Right cardiac atrium (tissue), 5 donors: ENCODE measurements at regions of chr1 and their contacts with region 1.

Region 1: DNA sequence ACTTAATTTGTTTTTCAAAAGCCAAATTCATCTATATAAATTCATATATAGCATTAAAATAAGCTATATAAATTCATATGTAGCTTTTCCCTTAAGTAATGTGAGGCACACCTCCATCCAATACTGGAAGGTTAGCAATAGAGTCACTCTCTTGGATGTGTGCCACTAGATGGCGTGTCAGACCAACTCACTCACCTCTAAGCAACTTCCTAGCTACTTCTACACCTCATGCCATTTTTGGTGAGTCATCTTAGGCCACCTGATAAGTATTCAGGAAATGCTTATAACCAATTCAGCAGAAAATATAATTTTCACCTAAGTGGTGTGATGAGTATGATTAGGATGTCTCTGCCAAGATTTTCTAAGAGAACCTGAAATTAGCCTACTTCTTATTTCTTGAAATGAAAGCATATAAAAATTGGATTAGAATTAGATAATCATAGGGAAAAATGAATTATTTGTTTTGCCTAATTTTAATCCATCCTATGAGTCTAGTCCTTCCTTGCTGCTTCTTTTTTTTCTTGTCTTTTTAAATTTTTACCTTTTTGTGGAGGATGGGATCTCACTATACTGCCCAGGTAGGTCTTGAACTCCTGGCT is 34.4 kb upstream of the TADA1 start:
- DNase-seq: peak; percentile 49 to 60 (median 50)
- ATAC-seq: peak; percentile 90 to 91
- H3K4me3 ChIP-seq: no peak overlapping the region
- H3K27ac ChIP-seq: no peak overlapping the region
- H3K4me1 ChIP-seq: no peaks in the 10 kb centered on the region
- H3K27me3 ChIP-seq: no peaks in the 10 kb centered on the region

Region 2: GRCh38 chr1:167052389-167052788 is 141.9 kb after region 1 on chr1:
- intact Hi-C with region 1: loop called in 2 of 4 experiments (anchors 5 kb)
- DNase-seq: no peak
- ATAC-seq: peak in 1 of 2 donors; percentile 42
- H3K4me3 ChIP-seq: no peak overlapping the region
- H3K27ac ChIP-seq: no peak overlapping the region
- H3K4me1 ChIP-seq: no peaks in the 10 kb centered on the region
- H3K27me3 ChIP-seq: no peaks in the 10 kb centered on the region